ENCODE measurements at regions of chr2 and their contacts with region 1.

Region 1: DNA sequence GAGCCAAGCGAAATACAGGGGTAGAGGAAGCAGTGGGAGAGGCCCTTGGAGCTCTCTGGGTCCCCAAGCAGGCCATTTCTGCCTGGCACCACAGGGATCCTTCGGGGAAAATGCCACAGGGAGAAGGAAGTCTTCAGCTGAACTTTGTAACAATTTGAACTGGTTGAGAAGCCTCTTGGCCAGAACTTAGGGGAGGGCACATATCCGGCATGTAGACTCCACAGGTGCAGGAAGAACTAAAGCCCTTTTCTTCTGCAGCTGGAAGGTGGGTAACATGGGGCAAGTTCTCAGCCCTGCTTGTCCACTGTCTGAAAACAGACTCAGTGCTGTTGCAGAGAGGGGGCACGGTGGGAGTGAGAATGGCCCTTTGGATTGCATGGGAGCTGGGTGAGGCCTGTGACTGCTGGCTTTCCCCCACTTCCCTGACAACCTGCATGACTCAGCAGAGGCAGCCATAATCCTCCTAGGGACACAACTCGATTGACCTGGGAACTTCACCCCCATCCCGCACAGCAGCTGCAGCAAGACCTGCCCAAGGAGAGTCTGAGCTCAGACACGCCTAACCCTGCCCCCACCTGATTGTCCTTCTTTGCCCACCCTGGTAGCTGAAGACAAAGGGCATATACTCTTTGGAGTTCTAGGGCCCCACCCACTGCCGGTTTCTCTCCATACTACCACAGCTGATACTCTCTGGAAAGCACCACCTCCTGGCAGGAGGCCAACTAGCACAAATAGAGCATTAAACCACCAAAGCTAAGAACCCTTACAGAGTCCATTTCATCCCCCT is 101.6 kb upstream of the FAM136A start:
- DNase-seq: peak; percentile 73 to 85
- H3K4me3 ChIP-seq: peak overlapping the region; percentile 59
- H3K27ac ChIP-seq: peak overlapping the region; percentile 96
- H3K4me1 ChIP-seq: peaks cover 43% of the 10 kb centered on the region
- H3K27me3 ChIP-seq: no peaks in the 10 kb centered on the region
- CTCF ChIP-seq: no peak

Region 2: GRCh38 chr2:68766376-68766845 is 1637.0 kb before region 1 on chr2:
- CTCF ChIA-PET with region 1: no interaction called
- POLR2A ChIA-PET with region 1: no interaction called
- intact Hi-C with region 1: no loop called
- DNase-seq: no peak
- H3K4me3 ChIP-seq: no peak overlapping the region
- H3K27ac ChIP-seq: no peak overlapping the region
- H3K4me1 ChIP-seq: no peaks in the 10 kb centered on the region
- H3K27me3 ChIP-seq: no peaks in the 10 kb centered on the region
- CTCF ChIP-seq: no peak

Region 3: DNA sequence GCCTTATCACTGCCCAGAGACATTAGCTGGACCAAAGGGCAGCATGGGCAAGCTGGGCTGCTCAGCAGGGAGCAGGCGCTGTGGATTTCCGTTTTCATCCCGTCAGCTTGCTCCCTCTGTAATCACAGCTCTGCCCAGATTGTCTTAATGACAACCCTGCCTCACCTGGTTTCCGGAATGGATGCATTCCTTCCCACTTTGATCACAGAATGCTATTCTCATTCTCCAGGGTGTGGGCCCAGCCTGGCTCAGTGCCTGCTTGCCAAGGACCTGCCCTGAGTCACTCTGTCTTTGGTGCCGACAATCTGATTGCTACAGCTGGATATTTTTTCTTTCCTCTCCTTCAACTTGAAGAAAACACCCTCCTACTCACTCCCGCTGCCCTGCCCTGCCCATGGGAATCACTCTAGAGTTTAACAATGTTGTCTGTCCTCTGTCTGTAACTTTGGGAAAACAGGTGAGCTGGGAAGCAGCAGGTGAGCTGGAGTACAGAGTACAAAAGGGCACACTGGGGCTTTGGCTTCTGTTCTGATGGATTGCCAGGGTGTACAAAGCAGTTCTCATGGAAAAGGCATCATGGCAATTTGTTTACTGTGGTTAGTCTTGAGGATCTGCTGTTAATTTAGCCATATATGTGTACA is 74.4 kb before region 1 on chr2:
- CTCF ChIA-PET with region 1: no interaction called
- POLR2A ChIA-PET with region 1: no interaction called
- intact Hi-C with region 1: loop called (anchors 2 kb)
- DNase-seq: peak; percentile 93 to 97
- H3K4me3 ChIP-seq: peak overlapping the region; percentile 8; the same call in 1 of the 2 replicates
- H3K27ac ChIP-seq: peak overlapping the region; percentile 81
- H3K4me1 ChIP-seq: peaks cover 29% of the 10 kb centered on the region
- H3K27me3 ChIP-seq: no peaks in the 10 kb centered on the region
- CTCF ChIP-seq: no peak

Region 4: GRCh38 chr2:70340921-70341765 is 62.3 kb before region 1 on chr2:
- CTCF ChIA-PET with region 1: no interaction called
- POLR2A ChIA-PET with region 1: no interaction called
- intact Hi-C with region 1: loop called (anchors 5 kb)
- DNase-seq: peak; percentile 65 to 70
- H3K4me3 ChIP-seq: no peak overlapping the region
- H3K27ac ChIP-seq: no peak overlapping the region
- H3K4me1 ChIP-seq: peaks cover 17% of the 10 kb centered on the region
- H3K27me3 ChIP-seq: no peaks in the 10 kb centered on the region
- CTCF ChIP-seq: peak; percentile 90

Region 5: DNA sequence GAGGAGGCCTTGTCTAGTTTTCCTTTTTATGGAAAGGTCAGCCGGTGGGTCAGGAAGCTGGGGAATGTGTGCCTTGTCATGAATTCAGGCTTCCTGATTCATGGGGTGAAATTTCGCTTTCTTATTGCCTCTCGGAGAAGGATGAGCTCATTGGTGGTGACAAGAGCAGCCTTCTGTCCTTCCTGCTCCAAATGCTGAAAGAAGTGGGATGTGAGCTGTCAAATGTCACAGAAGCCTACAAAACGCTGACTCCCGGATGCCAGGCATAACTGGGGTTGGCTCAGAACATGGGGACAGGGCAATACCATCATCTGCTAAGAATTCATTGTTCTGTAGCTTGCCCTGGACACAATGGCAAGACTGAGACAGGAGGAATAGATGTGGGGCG is 45.8 kb before region 1 on chr2:
- CTCF ChIA-PET with region 1: no interaction called
- POLR2A ChIA-PET with region 1: no interaction called
- intact Hi-C with region 1: loop called (anchors 2 kb)
- DNase-seq: peak; percentile 65 to 75
- H3K4me3 ChIP-seq: no peak overlapping the region
- H3K27ac ChIP-seq: peak overlapping the region; percentile 70
- H3K4me1 ChIP-seq: peaks cover 60% of the 10 kb centered on the region
- H3K27me3 ChIP-seq: no peaks in the 10 kb centered on the region
- CTCF ChIP-seq: no peak

Region 6: DNA sequence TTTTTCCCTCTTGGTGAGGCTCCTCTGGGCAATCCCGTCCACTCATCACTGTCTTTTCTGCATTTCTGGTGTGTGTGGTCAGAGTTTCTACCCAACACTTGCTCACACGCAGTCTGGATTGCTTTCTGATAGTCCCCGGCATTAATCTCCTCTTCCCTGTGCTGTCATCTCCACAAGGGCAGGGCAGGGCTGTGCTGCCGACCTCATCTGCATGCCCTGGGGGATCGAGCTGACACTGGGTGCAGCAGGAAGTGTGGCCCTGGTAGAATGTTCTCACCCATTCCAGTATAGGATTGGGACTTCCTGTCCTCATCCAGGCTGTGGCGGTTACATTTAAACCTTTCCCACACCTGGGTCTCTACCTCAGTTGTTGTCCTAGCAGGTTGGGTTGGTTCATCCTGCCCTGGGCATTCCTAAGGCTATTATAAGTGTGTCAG is 21.6 kb before region 1 on chr2:
- CTCF ChIA-PET with region 1: no interaction called
- POLR2A ChIA-PET with region 1: no interaction called
- intact Hi-C with region 1: loop called (anchors 1 kb)
- DNase-seq: peak; percentile 85 to 97
- H3K4me3 ChIP-seq: peak overlapping the region; percentile 34; the same call in 1 of the 2 replicates
- H3K27ac ChIP-seq: peak overlapping the region; percentile 98
- H3K4me1 ChIP-seq: peaks cover 35% of the 10 kb centered on the region
- H3K27me3 ChIP-seq: no peaks in the 10 kb centered on the region
- CTCF ChIP-seq: no peak

Region 7: DNA sequence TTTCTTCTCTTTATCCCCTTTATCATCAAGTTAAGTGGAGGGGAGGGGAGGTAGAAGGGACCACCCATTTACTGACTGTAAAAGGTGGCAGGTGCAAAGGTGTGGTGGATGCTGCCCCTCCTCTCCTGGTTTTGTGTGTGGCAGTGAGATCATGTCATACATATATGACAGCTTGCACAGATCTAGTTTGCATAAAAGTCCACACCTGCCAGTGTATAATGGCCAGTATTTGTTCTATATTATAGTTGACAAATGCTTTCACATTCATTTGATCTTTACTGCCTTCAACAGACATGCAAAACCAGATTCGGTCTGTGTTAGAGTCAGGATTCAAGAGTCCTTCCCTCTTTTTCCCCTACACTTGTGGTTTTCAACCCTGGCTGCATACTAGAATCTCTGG is 95.1 kb after region 1 on chr2:
- CTCF ChIA-PET with region 1: no interaction called
- POLR2A ChIA-PET with region 1: no interaction called
- intact Hi-C with region 1: no loop called
- DNase-seq: no peak
- H3K4me3 ChIP-seq: no peak overlapping the region
- H3K27ac ChIP-seq: peak overlapping the region; percentile 48; the same call in 1 of the 2 replicates
- H3K4me1 ChIP-seq: peaks cover 31% of the 10 kb centered on the region
- H3K27me3 ChIP-seq: no peaks in the 10 kb centered on the region
- CTCF ChIP-seq: no peak

Region 8: GRCh38 chr2:70616168-70616694 is 212.8 kb after region 1 on chr2:
- CTCF ChIA-PET with region 1: interaction called, 5 read pairs
- POLR2A ChIA-PET with region 1: no interaction called
- intact Hi-C with region 1: loop called (anchors 1 kb)
- DNase-seq: peak; percentile 67 to 96
- H3K4me3 ChIP-seq: no peak overlapping the region
- H3K27ac ChIP-seq: peak overlapping the region; percentile 33; the same call in 1 of the 2 replicates
- H3K4me1 ChIP-seq: peaks cover 24% of the 10 kb centered on the region
- H3K27me3 ChIP-seq: no peaks in the 10 kb centered on the region
- CTCF ChIP-seq: no peak

Measured in PC-9 (cell line).